ENCODE measurements at regions of chr11 and their contacts with region 1.

Region 1: GRCh38 chr11:66694732-66695207 is 17.1 kb upstream of the RBM4B start:
- H3K4me3 ChIP-seq: no peak overlapping the region
- H3K27ac ChIP-seq: no peak overlapping the region
- H3K4me1 ChIP-seq: no peaks in the 10 kb centered on the region
- CTCF ChIP-seq: peak; percentile 95

Region 2: DNA sequence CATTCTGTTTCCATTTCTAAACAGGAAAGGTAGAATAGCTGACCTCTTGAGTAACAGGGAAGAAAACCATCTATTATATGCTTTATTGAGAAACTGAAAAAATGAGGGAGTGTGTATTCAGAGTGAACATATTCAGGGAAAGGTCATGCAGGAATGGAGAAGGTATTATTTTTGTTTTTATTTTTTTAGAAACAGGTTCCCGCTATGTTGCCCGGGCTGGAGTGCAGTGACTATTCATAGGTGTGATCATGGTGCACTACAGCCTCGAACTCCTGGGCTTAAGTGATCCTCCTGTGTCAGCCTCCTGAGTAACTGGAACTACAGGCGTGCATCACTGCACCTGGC is 139.7 kb after region 1 on chr11:
- CTCF ChIA-PET with region 1: interaction called, 62 read pairs
- POLR2A ChIA-PET with region 1: no interaction called
- H3K4me3 ChIP-seq: no peak overlapping the region
- H3K27ac ChIP-seq: no peak overlapping the region
- H3K4me1 ChIP-seq: no peaks in the 10 kb centered on the region
- CTCF ChIP-seq: no peak

Region 3: GRCh38 chr11:66842896-66843775 is 148.4 kb after region 1 on chr11 and contains the start of gene RCE1:
- CTCF ChIA-PET with region 1: interaction called, 12 read pairs
- POLR2A ChIA-PET with region 1: interaction called, 6 read pairs
- H3K4me3 ChIP-seq: peak within 1 kb of the TSS; percentile 71
- H3K27ac ChIP-seq: peak within 1 kb of the TSS; percentile 86
- H3K4me1 ChIP-seq: no peaks in the 10 kb centered on the region
- CTCF ChIP-seq: no peak; the same call in 1 of the 2 replicates

Region 4: DNA sequence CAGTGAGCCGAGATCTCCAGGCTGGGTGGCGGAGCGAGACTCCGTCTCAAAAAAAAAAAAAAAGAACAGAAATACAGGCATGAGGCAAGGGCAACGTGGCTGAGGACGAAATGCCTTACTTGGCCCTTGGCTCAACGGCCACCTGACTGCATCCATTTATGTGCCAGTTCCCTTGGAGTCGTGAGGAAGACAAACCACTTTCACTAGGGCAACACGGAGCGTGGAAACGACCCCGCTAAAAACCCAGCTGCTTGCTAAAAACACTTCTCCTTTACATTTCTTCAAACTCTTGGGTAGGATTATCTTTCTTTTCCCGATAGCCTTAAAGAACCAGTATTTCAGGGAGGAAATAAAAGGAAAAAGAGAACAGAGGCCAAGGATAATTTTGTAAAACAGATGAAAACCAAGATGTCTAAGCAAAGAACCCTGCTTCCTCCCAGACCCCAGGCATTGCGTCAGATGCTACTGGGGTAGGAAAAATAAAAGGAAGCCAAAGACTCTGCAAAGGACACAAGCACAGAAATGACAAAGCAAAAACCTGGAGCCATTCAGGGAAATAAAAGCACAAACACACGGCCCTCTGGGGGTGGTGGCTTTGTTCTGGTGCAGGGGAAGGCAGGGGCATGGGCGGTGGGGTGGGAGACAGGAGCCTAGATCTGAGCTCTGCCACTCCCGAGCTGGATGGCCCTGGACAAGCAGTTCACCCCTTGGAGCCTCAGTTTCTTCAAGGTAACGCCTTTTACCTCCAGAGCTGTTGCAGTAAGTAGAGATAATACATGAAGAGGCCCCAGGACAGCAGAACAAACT is 226.4 kb after region 1 on chr11:
- CTCF ChIA-PET with region 1: no interaction called
- POLR2A ChIA-PET with region 1: no interaction called
- H3K4me3 ChIP-seq: no peak overlapping the region
- H3K27ac ChIP-seq: no peak overlapping the region
- H3K4me1 ChIP-seq: no peaks in the 10 kb centered on the region
- CTCF ChIP-seq: no peak

Region 5: DNA sequence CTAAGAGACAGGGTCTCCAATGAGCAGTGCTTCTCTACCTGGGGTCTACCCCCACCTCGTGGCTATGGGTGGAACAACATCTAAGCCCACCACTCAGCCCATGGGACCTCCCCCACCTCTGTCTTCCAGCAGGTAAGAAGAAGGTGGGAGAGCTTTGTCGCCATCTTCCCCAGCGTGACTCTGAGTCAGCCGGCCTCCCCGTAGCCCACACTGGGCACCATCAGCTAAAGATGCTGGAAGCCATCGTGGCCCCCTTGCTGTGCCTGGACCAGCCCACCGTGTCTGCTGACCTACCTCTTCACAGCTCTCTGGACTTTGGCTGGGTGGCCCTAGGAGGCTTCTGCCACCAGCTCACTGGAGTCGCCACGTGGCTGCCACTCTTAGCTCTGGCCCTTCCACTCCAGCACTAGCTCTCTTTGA is 281.3 kb after region 1 on chr11:
- CTCF ChIA-PET with region 1: interaction called, 4 read pairs
- POLR2A ChIA-PET with region 1: interaction called, 10 read pairs
- H3K4me3 ChIP-seq: no peak overlapping the region
- H3K27ac ChIP-seq: no peak overlapping the region
- H3K4me1 ChIP-seq: no peaks in the 10 kb centered on the region
- CTCF ChIP-seq: peak; percentile 56

Measured in HEK293 (cell line).